H1 (cell line): ENCODE measurements at regions of chr9 and their contacts with region 1.

Region 1: GRCh38 chr9:97038909-97039781 is at the start of gene CTSV:
- DNase-seq: peak; percentile 83 to 96
- H3K4me3 ChIP-seq: peak within 1 kb of the TSS; percentile 39 to 67 (median 62)
- H3K27ac ChIP-seq: no peak within 1 kb of the TSS
- H3K4me1 ChIP-seq: peaks cover 0 to 12% (median 4%) of the 10 kb centered on the region in 4 experiments; a peak in 4 of 7 replicates
- H3K27me3 ChIP-seq: 0 out of 7 replicates have a peak, but pooled peaks cover 0 to 3% (median 0%) of the 10 kb centered on the region in 4 experiments
- CTCF ChIP-seq: no peak
- EP300 ChIP-seq: no peak
- POLR2A ChIP-seq: peak; percentile 89 to 96
- RAD21 ChIP-seq: peak in 1 of 2 experiments; percentile 9; a peak in 1 of 4 replicates
- total RNA-seq, gene CTSV: 113 and 114 TPM in 2 replicates

Region 2: GRCh38 chr9:97052735-97053134 is 13.6 kb after region 1 on chr9:
- CTCF ChIA-PET with region 1: interaction called, 6 read pairs
- POLR2A ChIA-PET with region 1: interaction called, 22 read pairs
- DNase-seq: peak in 1 of 2 experiments; percentile 40
- H3K4me3 ChIP-seq: peak overlapping the region in 1 of 4 experiments; percentile 37; a peak in 1 of 8 replicates
- H3K27ac ChIP-seq: 0 out of 2 replicates have a peak overlapping the region, but pooled peaks have one; percentile 34
- H3K4me1 ChIP-seq: peaks cover 11 to 25% (median 16%) of the 10 kb centered on the region in 4 experiments
- H3K27me3 ChIP-seq: no peaks in the 10 kb centered on the region
- CTCF ChIP-seq: no peak
- EP300 ChIP-seq: no peak
- POLR2A ChIP-seq: no peak
- RAD21 ChIP-seq: no peak

Region 3: GRCh38 chr9:97109194-97109811 is 70.2 kb after region 1 on chr9:
- CTCF ChIA-PET with region 1: interaction called, 10 read pairs
- POLR2A ChIA-PET with region 1: interaction called, 3 read pairs
- DNase-seq: peak; percentile 43 to 67
- H3K4me3 ChIP-seq: no peak overlapping the region
- H3K27ac ChIP-seq: no peak overlapping the region
- H3K4me1 ChIP-seq: no peaks in the 10 kb centered on the region
- H3K27me3 ChIP-seq: no peaks in the 10 kb centered on the region
- CTCF ChIP-seq: peak; percentile 62 to 82 (median 78)
- EP300 ChIP-seq: no peak
- POLR2A ChIP-seq: no peak
- RAD21 ChIP-seq: peak; percentile 93 to 95